Activated T-helper 1 cell treated with anti-CD3 and anti-CD28 coated beads, Interleukin-12 subunit alpha, Interleukin-12 subunit beta, Interleukin-2, Interleukin-4 antibody, amounts not matched to agents 30 ng/mL and 10 ng/mL and 1 ng/mL, durations not matched to agents 14 hours and 24 hours and 36 hours (primary cell): ENCODE measurements at regions of chr12 and their contacts with region 1.

Region 1: GRCh38 chr12:55973598-55974307 is at the start of gene RAB5B:
- DNase-seq: peak; percentile 98
- H3K4me3 Mint-ChIP-seq: no peak within 1 kb of the TSS
- H3K27ac Mint-ChIP-seq: no peak within 1 kb of the TSS
- H3K4me1 Mint-ChIP-seq: peaks cover 20% of the 10 kb centered on the region
- H3K27me3 Mint-ChIP-seq: no peaks in the 10 kb centered on the region
- total RNA-seq, gene RAB5B: 42.6 and 47.0 TPM in 2 replicates

Region 2: GRCh38 chr12:55715833-55716581 is 257.7 kb before region 1 on chr12 and contains the start of gene BLOC1S1:
- intact Hi-C with region 1: loop called (anchors 1 kb)
- DNase-seq: peak; percentile 90
- H3K4me3 Mint-ChIP-seq: peak within 1 kb of the TSS; percentile 91
- H3K27ac Mint-ChIP-seq: peak within 1 kb of the TSS; percentile 93
- H3K4me1 Mint-ChIP-seq: peaks cover 34% of the 10 kb centered on the region
- H3K27me3 Mint-ChIP-seq: peaks cover 16% of the 10 kb centered on the region
- total RNA-seq, gene BLOC1S1: 62.5 and 64.8 TPM in 2 replicates

Region 3: GRCh38 chr12:55996715-55997534 is 23.2 kb after region 1 on chr12 and contains the start of gene SUOX:
- intact Hi-C with region 1: loop called (anchors 1 kb)
- DNase-seq: peak; percentile 50
- H3K4me3 Mint-ChIP-seq: peak within 1 kb of the TSS; percentile 88
- H3K27ac Mint-ChIP-seq: peak within 1 kb of the TSS; percentile 64
- H3K4me1 Mint-ChIP-seq: peaks cover 30% of the 10 kb centered on the region
- H3K27me3 Mint-ChIP-seq: no peaks in the 10 kb centered on the region
- total RNA-seq, gene SUOX: 12.0 and 12.9 TPM in 2 replicates

Region 4: DNA sequence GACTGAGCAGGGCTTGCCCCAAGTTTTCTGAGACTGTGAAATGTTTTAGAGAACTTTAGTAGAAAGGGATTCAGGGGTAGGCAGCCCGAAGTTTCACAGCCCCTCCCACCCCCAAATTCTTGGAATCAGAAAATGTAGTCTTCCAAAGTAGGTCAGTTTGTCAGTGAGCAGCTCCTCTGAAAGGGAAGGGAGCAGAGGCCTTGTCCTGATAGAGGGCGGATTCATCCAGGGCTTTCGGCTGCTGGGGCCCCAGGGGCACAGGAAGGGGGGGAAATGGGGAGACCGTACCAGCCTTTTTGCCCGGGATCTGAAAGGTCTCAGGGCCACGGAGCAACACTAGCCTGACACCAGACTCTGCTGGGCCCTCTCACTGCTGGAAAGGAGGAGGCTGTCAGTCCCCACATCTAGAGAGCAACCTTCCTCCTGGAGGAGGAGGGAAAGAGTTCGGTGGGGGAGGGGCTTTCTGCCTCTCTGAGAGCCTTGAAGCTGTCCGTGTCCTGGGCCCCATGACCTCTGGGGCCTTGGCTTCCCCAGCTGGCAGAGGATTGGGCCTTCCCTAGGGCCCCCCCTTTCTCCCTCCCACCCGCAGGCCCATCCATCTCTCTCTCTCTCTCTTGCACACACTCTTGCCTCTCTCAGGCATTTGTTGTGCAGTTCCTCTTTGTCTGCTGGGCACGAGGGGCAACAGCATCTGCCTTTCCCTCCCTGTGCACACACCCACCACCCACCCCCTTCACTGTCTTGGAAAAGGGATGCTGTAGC is 46.9 kb after region 1 on chr12 and contains the start of gene IKZF4:
- intact Hi-C with region 1: loop called (anchors 2 kb)
- DNase-seq: no peak
- H3K4me3 Mint-ChIP-seq: peak within 1 kb of the TSS; percentile 97
- H3K27ac Mint-ChIP-seq: peak within 1 kb of the TSS; percentile 98
- H3K4me1 Mint-ChIP-seq: peaks cover 45% of the 10 kb centered on the region
- H3K27me3 Mint-ChIP-seq: no peaks in the 10 kb centered on the region
- total RNA-seq, gene IKZF4: 31.9 and 35.7 TPM in 2 replicates

Region 5: GRCh38 chr12:56127888-56128669 is 154.3 kb after region 1 on chr12 and contains the start of gene ESYT1:
- intact Hi-C with region 1: loop called (anchors 1 kb)
- DNase-seq: peak; percentile 98
- H3K4me3 Mint-ChIP-seq: peak within 1 kb of the TSS; percentile 97
- H3K27ac Mint-ChIP-seq: peak within 1 kb of the TSS; percentile 94
- H3K4me1 Mint-ChIP-seq: peaks cover 62% of the 10 kb centered on the region
- H3K27me3 Mint-ChIP-seq: no peaks in the 10 kb centered on the region
- total RNA-seq, gene ESYT1: 159 and 161 TPM in 2 replicates